Activated CD4-positive, alpha-beta T cell treated with anti-CD3 and anti-CD28 coated beads, Interleukin-2, amount 10 ng/mL, durations not matched to agents 24 days and 14 days (primary cell): ENCODE measurements at regions of chr20 and their contacts with region 1.

Region 1: DNA sequence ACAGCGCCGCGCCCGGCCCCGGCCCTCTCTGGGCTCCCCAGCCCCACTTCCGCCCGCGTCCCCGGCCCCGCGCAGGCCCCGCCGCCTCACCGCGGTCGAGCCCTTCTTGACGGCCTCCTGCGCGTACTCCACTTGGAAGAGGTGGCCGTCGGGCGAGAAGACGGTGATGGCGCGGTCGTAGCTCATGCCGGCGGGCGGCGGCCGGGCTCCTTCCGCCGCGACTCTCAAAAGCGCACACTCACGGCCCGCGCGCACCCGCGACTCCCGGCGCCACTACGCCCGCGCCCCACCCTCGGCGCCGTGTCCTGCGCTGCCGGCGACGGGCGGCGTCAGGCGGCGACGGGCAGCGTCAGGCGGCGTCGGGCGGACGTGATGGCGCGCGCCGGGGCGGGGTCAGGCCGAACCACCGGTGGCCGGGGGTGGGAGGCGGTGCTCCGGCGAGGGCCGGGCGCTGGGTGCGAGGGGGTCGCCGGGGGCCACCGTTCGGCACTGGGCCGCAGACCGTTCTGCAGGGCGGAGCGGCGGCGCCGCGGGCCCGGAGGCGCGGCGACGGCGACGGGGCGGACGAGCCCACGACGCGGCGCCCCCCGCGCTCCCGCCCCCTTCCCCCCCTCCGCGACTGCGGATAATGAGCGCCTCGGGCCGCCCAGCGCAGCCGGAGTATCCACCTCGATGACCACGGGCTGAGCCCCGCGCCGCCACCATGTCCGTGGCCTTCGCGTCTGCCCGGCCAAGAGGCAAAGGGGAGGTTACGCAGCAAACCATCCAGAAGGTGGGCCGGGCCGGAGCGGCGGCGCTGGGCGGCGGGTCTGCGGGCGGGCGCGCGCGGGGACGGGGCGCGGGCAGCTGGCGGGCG is at the starts of genes PSMA7 and SS18L1:
- DNase-seq: peak; percentile 96
- H3K4me3 Mint-ChIP-seq: peak within 1 kb of the TSS; percentile 94
- H3K27ac Mint-ChIP-seq: peak within 1 kb of the TSS; percentile 91
- H3K4me1 Mint-ChIP-seq: peaks cover 35% of the 10 kb centered on the region
- H3K27me3 Mint-ChIP-seq: no peaks in the 10 kb centered on the region
- total RNA-seq, gene PSMA7: 434 and 449 TPM in 2 replicates
- total RNA-seq, gene SS18L1: 26.7 and 29.0 TPM in 2 replicates

Region 2: GRCh38 chr20:62065669-62066338 is 77.5 kb before region 1 on chr20 and contains the start of gene TAF4:
- intact Hi-C with region 1: loop called (anchors 2 kb)
- DNase-seq: peak; percentile 95
- H3K4me3 Mint-ChIP-seq: peak within 1 kb of the TSS; percentile 88
- H3K27ac Mint-ChIP-seq: peak within 1 kb of the TSS; percentile 89
- H3K4me1 Mint-ChIP-seq: peaks cover 30% of the 10 kb centered on the region
- H3K27me3 Mint-ChIP-seq: peaks cover 3% of the 10 kb centered on the region
- total RNA-seq, gene TAF4: 25.6 and 26.6 TPM in 2 replicates

Region 3: DNA sequence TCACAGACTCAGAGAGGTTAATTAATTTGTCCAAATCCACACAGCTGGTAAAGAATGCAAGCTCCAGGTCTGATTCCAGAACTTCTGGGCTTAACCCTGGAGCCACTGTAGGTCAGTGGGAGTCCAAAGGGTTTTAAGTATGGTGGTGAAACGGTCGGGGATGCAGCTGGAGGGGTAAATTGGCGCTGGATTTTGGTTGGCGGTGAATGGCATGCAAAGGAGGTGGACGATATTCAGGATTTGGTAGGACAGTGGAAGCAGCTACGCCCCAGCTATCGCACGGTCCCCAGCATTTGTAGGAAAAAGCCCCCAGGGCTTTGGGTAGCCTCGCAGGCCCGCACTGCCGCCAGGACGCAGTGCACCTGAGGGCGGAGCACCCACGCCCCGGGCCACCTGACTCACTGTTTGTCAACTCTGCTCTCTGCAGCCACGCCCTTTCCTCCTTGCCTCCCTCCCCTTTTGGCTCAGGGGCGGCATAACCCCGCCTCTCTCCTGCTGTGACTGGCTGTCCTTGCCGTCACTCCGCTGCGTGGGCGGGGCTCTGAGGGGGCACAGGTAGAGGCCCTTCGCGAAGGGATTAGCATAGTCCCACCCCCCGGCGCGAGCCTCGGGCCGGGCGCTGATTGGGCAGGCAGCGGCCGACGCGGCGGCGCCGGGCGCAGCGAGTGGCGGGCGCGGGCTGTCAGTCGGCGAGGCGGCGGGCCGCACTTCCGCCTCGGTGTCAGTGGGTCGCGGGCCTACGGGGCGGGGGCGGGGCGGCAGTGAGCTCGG is 94.6 kb after region 1 on chr20 and contains the start of gene OSBPL2:
- intact Hi-C with region 1: loop called (anchors 1 kb)
- DNase-seq: peak; percentile 100
- H3K4me3 Mint-ChIP-seq: peak within 1 kb of the TSS; percentile 81
- H3K27ac Mint-ChIP-seq: peak within 1 kb of the TSS; percentile 78
- H3K4me1 Mint-ChIP-seq: peaks cover 26% of the 10 kb centered on the region
- H3K27me3 Mint-ChIP-seq: no peaks in the 10 kb centered on the region
- total RNA-seq, gene OSBPL2: 29.0 and 29.2 TPM in 2 replicates